Activated T-helper 1 cell treated with anti-CD3 and anti-CD28 coated beads, Interleukin-12 subunit alpha, Interleukin-12 subunit beta, Interleukin-2, Interleukin-4 antibody, amounts not matched to agents 30 ng/mL and 10 ng/mL and 1 ng/mL, durations not matched to agents 14 hours and 24 hours and 36 hours (primary cell): ENCODE measurements at regions of chr4 and their contacts with region 1.

Region 1: DNA sequence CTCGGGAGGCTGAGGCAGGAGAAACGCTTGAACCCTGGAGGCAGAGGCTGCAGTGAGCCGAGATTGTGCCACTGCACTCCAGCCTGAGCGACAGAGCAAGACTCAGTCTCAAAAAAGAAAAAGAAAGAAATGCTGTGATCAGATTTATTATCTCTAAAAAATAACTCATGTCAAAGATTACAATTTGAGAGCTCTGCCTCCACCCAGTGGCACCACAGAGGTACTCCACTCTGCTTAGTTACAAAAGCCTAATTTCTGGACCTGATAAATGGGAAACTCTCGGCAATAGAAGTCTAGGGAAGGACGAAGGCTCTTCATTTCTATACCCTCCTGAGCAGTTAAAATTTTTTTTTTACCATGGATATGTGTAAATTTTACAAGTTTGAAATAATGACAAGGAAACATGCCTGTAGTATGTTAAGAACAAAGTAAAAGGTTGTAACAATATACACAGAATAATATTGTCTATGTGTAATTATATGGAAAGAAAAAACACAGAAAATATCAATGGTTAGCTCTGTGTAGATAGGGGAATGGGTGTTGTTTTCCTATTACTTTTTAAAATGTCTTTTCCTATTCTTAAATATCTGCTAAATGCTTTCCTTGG is 149.8 kb downstream of the STIM2 start:
- DNase-seq: no peak
- H3K4me3 Mint-ChIP-seq: no peak overlapping the region
- H3K27ac Mint-ChIP-seq: no peak overlapping the region
- H3K4me1 Mint-ChIP-seq: peaks cover 4% of the 10 kb centered on the region
- H3K27me3 Mint-ChIP-seq: no peaks in the 10 kb centered on the region

Region 2: GRCh38 chr4:25986807-25987206 is 1023.6 kb before region 1 on chr4:
- intact Hi-C with region 1: loop called (anchors 5 kb)
- DNase-seq: no peak
- H3K4me3 Mint-ChIP-seq: no peak overlapping the region
- H3K27ac Mint-ChIP-seq: no peak overlapping the region
- H3K4me1 Mint-ChIP-seq: peaks cover 8% of the 10 kb centered on the region
- H3K27me3 Mint-ChIP-seq: peaks cover 2% of the 10 kb centered on the region

Region 3: DNA sequence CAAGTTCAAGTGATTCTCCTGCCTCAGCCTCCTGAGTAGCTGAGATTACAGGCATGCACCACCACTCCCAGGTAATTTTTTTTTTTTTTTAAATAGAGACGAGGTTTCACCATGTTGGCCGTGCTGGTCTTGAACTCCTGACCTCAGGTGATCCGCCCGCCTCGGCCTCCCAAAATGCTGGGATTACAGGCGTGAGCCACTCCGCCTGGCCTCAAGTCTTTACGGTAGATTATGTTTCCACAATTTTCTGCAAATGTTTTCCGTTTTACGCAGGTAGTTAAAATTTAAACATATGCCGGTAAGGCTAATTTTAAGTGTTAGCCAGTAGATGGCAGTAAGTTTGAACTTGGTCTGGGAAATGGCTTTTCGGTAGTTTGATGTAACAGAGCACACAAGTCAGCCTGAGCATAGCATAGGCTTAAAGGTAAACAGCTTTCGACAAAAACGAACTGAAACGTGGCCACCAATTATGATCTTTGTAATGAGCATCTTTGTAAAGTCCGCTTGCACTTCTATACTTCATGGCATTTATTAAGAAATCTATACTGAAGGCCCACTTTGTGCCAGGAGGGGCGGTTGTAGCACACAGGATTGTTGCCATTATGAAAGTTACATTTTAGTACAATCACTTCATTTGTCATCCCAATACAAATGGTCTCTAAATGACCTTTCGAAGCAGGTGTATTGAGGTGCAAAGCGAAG is 551.2 kb before region 1 on chr4:
- intact Hi-C with region 1: loop called (anchors 1 kb)
- DNase-seq: no peak
- H3K4me3 Mint-ChIP-seq: no peak overlapping the region
- H3K27ac Mint-ChIP-seq: no peak overlapping the region
- H3K4me1 Mint-ChIP-seq: peaks cover 13% of the 10 kb centered on the region
- H3K27me3 Mint-ChIP-seq: peaks cover 2% of the 10 kb centered on the region

Region 4: DNA sequence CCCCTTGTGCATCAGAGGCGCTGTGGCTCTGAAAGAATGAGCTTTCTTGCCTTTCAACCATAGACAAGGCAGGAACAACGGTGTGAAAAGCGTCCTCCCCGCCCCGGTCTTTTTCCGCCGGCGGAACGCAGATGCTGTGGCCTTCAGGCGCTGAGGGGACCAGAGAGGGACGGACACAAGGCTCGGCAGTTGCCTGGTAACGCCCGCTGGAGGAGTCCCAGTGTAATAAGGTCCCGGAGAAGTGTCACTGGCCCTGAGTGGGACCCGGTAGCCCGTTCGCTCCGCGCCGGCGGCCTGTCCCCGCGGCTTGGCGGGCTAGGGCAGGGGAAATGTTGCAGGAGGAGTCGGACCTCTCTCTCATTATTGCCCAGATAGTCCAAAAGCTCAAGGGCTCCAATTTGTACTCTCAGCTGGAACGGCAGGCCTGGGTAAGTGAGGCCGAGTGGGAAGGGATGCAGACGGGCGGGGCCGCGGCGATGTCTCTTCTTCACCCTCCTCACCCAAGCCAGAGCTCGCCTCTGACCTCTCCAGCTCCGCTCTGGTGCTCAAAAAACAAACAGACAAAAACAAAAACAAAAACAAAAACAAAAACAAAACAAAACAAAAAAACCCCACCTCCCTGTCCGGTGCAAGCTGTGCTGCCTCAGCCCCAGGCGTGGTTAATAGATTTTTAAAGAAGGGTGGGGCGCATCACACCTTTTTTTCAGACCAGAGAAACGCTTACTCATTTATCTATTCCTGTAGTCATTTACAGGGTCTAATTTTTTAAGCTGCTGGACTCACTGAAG is 426.4 kb before region 1 on chr4 and contains the start of gene TBC1D19:
- intact Hi-C with region 1: loop called (anchors 1 kb)
- DNase-seq: peak; percentile 85
- H3K4me3 Mint-ChIP-seq: peak within 1 kb of the TSS; percentile 93
- H3K27ac Mint-ChIP-seq: peak within 1 kb of the TSS; percentile 93
- H3K4me1 Mint-ChIP-seq: peaks cover 37% of the 10 kb centered on the region
- H3K27me3 Mint-ChIP-seq: peaks cover 2% of the 10 kb centered on the region
- total RNA-seq, gene TBC1D19: 4.3 and 4.7 TPM in 2 replicates

Region 5: DNA sequence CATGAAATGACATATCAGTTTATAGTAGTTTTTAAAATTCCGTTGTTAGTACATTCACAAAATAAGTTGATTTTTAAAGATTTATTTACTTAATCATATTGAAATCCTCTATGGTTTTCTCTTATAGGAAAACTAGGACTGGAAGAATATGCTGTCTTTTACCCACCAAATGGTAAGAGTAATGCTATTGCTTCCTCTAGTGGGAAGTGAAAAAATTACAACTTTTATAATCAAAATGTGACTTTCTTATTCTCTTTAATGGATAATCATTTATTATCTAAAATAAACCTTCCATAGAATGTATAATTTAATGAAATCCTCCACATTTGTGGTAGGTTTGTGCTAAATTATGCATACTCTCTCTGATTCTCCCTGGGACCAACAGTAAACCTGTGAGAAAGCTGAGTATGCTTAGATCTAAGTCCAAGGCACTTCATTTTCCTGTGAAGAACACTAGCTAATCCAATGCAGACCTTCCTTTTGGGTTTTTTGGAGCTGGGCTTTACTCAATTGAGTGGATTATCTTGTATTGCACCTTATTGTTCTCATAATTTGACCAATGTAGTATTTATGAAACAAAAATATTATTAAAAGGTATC is 290.4 kb before region 1 on chr4:
- intact Hi-C with region 1: loop called (anchors 1 kb)
- DNase-seq: no peak
- H3K4me3 Mint-ChIP-seq: no peak overlapping the region
- H3K27ac Mint-ChIP-seq: no peak overlapping the region
- H3K4me1 Mint-ChIP-seq: no peaks in the 10 kb centered on the region
- H3K27me3 Mint-ChIP-seq: peaks cover 2% of the 10 kb centered on the region

Region 6: GRCh38 chr4:26780539-26780938 is 229.9 kb before region 1 on chr4:
- intact Hi-C with region 1: no loop called
- DNase-seq: no peak
- H3K4me3 Mint-ChIP-seq: no peak overlapping the region
- H3K27ac Mint-ChIP-seq: no peak overlapping the region
- H3K4me1 Mint-ChIP-seq: no peaks in the 10 kb centered on the region
- H3K27me3 Mint-ChIP-seq: no peaks in the 10 kb centered on the region